Activated CD4-positive, alpha-beta memory T cell treated with anti-CD3 and anti-CD28 coated beads for 36 hours (primary cell): ENCODE measurements at regions of chr15 and their contacts with region 1.

Region 1: DNA sequence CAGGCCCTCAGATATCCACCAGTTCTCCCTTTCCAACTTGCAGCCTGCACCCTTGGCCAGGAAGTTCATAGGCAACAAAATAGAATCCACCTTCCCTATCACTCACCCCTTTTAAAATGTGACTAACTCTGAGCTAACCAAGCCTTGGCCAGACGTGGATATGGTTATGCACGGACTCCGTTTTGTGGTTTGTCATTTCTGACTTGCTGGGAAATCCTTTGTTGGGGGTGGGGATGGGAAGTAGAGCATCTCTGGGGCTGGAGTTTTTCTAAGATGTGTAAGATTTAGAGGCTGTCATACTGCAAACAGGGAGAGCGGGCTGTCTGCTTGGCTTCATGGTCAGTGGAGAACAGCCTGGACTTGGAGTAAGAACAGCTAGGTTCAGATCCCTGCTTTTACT is 62.6 kb downstream of the SMAD3 start:
- DNase-seq: peak; percentile 73
- H3K4me3 Mint-ChIP-seq: no peak overlapping the region
- H3K27ac Mint-ChIP-seq: peak overlapping the region; percentile 53
- H3K4me1 Mint-ChIP-seq: peaks cover 84% of the 10 kb centered on the region
- H3K27me3 Mint-ChIP-seq: no peaks in the 10 kb centered on the region

Region 2: DNA sequence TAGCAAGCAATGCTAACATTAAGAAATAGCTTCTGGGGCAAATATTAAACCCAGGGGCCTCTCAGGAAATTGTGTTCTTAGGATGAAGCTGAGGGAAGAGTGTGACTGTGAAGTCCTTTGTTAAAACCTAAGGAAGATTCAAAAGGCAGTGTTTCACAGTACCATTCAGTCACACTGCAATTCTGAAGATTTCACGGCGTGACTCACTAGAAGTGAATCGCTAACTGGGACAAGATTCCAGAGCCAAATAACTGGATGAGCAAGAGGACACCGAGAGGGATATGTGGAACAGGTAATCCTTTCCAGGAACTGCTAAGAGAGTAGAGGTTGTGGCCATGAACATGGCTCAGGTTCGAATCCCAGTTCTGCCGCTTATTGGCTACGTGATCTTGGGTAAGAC is 124.4 kb before region 1 on chr15:
- CTCF ChIA-PET with region 1: no interaction called
- POLR2A ChIA-PET with region 1: no interaction called
- intact Hi-C with region 1: no loop called
- DNase-seq: no peak
- H3K4me3 Mint-ChIP-seq: no peak overlapping the region
- H3K27ac Mint-ChIP-seq: no peak overlapping the region
- H3K4me1 Mint-ChIP-seq: no peaks in the 10 kb centered on the region
- H3K27me3 Mint-ChIP-seq: no peaks in the 10 kb centered on the region

Region 3: GRCh38 chr15:67114846-67115600 is 12.9 kb before region 1 on chr15:
- CTCF ChIA-PET with region 1: no interaction called
- POLR2A ChIA-PET with region 1: interaction called, 26 read pairs
- intact Hi-C with region 1: loop called (anchors 1 kb)
- DNase-seq: peak; percentile 60
- H3K4me3 Mint-ChIP-seq: peak overlapping the region; percentile 7
- H3K27ac Mint-ChIP-seq: peak overlapping the region; percentile 95
- H3K4me1 Mint-ChIP-seq: peaks cover 90% of the 10 kb centered on the region
- H3K27me3 Mint-ChIP-seq: no peaks in the 10 kb centered on the region